CD8-positive, alpha-beta memory T cell (primary cell): ENCODE measurements at regions of chr11 and their contacts with region 1.

Region 1: DNA sequence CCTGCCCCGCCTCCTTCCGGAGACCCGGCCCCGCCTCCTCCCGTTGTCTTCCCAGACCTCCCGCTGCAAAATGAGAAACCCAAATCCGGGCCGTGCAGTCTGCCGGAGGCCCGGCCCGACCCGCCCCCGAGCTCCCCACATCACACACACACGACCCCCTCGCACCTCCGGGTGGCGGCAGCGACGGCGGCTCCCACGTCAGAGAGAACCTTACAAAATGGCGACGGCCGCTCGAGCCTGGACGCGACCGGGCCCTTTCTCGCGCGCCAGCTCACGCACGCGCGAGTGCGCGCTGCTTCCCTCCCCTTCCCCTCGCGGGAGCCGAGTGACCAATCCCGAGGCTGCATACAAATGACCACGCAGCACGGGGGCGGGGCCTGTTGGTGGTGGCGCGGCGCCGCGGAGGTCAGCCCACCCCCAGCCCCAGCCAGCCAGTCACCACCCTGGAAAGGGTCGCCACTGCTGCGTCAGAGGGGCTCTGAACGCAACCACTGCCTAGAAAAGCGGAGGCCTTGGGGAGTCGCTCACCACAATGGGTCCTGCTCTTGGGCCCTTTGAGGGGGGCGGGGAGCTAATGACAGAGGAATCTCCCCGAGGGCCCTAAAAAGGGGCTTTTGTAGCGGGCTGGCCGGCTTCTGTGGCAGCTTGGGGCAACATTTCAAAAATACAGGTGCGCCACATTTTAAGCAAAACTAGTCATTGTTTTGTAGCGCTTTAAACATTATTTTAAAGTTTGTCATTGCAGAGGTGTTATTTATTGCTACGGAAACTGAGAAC is at the start of gene RBM4B:
- DNase-seq: peak; percentile 95 to 98 (median 97)
- H3K4me3 ChIP-seq: peak within 1 kb of the TSS; percentile 99
- H3K4me3 Mint-ChIP-seq: peak within 1 kb of the TSS; percentile 90 to 99 (median 95)
- H3K27ac ChIP-seq: peak within 1 kb of the TSS; percentile 100
- H3K27ac Mint-ChIP-seq: peak within 1 kb of the TSS; percentile 98 to 100 (median 100)
- H3K4me1 ChIP-seq: peaks cover 43% of the 10 kb centered on the region
- H3K4me1 Mint-ChIP-seq: peaks cover 34 to 50% (median 42%) of the 10 kb centered on the region in 3 donors
- H3K27me3 ChIP-seq: no peaks in the 10 kb centered on the region
- H3K27me3 Mint-ChIP-seq: no peaks in the 10 kb centered on the region
- total RNA-seq, gene RBM4B: 19.5 to 20.0 TPM

Region 2: DNA sequence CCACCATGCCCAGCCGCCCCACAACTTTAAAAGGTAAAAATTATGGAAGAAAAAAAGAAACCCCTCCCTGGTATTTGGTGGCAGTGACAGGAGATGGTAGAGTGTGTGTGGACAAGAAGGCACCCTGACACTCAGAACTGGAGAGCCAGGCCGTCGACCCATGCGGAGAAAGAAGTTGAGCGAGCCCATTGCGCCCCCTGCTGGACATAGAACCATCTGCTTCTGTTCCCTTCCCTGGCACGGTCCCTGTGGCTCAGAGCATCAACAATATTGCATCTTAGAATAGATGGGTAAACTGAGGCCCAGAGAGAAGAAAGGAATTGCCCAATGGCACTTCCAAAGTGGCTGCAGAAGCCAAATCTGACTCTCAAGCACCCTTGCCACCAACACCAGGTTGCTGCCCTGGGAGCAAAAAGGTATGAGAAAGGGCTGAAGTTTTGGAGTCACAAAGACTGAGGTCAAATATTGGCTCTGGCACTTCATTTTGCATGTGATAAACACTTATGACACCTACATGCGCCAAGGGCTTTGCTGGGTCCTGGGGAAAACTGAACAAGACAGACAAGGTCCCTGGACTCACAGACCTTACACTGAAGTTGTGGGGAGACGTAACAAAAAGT is 247.7 kb before region 1 on chr11:
- CTCF ChIA-PET with region 1: interaction called, 3 read pairs
- POLR2A ChIA-PET with region 1: interaction called, 12 read pairs
- DNase-seq: peak; percentile 41 to 76 (median 61)
- H3K4me3 ChIP-seq: no peak overlapping the region
- H3K4me3 Mint-ChIP-seq: peak overlapping the region in 1 of 7 donors; percentile 37
- H3K27ac ChIP-seq: no peak overlapping the region
- H3K27ac Mint-ChIP-seq: peak overlapping the region in 1 of 8 donors; percentile 47
- H3K4me1 ChIP-seq: no peaks in the 10 kb centered on the region
- H3K4me1 Mint-ChIP-seq: peaks cover 0 to 3% (median 0%) of the 10 kb centered on the region in 3 donors
- H3K27me3 ChIP-seq: no peaks in the 10 kb centered on the region
- H3K27me3 Mint-ChIP-seq: peaks cover 3 to 4% of the 10 kb centered on the region in 2 donors

Region 3: DNA sequence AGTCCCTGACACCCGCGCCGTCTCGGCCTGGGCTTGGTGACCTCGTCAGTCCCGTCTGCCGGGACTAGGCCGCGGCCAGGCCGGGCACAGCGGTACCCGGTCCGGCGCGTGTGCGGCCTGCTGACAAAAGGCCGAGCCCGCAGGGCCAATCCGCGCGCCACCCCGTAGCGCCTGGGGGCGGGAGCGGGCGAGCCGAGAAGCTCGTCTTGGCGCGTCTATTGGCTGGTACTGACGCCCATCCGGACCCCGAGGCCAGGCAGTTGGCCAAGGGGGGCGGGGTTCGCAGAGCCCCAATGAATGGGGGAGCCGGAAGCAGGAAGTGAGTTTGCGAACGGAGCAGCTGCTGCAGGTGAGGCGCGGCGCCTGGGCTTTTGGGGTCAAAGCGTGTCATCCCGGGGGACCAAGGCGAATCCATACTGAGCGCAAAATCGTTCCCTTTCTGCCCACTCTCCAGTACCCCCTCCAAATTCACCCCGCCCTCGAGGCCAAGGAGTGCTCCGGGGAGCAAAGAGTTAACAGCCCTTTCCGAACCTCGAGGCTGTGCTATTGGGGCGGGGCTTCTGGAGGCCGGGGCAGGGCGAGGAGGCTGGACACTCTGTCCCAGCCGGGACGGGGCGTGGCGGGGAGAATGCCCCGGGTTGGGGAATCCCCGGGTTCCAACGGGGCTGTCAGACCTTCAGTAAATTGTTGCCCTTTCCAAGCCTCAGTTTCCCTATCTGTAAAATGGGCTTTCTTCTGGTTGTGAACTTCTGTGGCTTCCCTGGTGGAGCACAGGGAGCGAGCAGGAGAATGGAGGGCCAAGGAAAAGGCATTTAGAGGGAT is 197.5 kb before region 1 on chr11 and contains the start of gene DPP3:
- CTCF ChIA-PET with region 1: interaction called, 4 read pairs
- POLR2A ChIA-PET with region 1: interaction called, 13 read pairs
- DNase-seq: peak; percentile 93 to 97 (median 94)
- H3K4me3 ChIP-seq: peak within 1 kb of the TSS; percentile 90
- H3K4me3 Mint-ChIP-seq: peak within 1 kb of the TSS; percentile 87 to 99 (median 92)
- H3K27ac ChIP-seq: peak within 1 kb of the TSS; percentile 83
- H3K27ac Mint-ChIP-seq: peak within 1 kb of the TSS; percentile 74 to 97 (median 92)
- H3K4me1 ChIP-seq: peaks cover 18% of the 10 kb centered on the region
- H3K4me1 Mint-ChIP-seq: peaks cover 22 to 40% (median 30%) of the 10 kb centered on the region in 3 donors
- H3K27me3 ChIP-seq: no peaks in the 10 kb centered on the region
- H3K27me3 Mint-ChIP-seq: peaks cover 0 to 1% of the 10 kb centered on the region in 2 donors
- total RNA-seq, gene DPP3: 67.7 to 80.1 TPM

Region 4: DNA sequence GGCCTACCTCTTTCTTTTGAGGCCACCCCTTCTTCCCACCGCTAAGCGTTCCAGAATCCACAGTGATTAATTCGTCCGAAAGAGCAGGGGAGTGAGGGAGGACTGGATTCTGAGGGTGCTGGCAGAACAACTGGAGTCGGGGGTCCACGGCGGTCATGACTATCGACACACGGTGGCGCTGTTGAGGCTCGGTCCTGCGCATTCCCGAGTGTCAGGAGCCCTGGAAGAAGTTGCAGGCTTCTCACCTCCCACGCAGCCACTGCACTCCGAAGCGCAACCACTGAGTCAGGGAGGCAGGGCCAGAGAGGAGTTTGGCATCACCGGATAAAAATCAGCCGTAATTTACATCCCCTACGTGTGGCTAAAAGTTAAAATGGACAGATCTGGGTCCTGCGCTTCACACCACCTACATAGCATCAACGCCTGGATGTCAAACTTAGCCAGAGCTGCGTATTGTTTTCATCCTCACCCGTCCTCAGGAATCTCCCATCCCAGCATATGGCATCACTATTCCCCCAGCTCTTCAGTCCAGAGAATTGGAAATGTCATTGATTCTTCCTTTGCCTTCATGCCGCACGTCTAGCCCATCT is 98.7 kb before region 1 on chr11:
- CTCF ChIA-PET with region 1: interaction called, 135 read pairs
- POLR2A ChIA-PET with region 1: interaction called, 7 read pairs
- DNase-seq: peak; percentile 63 to 85 (median 71)
- H3K4me3 ChIP-seq: no peak overlapping the region
- H3K4me3 Mint-ChIP-seq: no peak overlapping the region
- H3K27ac ChIP-seq: no peak overlapping the region
- H3K27ac Mint-ChIP-seq: peak overlapping the region in 3 of 8 donors; percentile 12 to 91 (median 17)
- H3K4me1 ChIP-seq: peaks cover 3% of the 10 kb centered on the region
- H3K4me1 Mint-ChIP-seq: peaks cover 9 to 11% (median 10%) of the 10 kb centered on the region in 3 donors
- H3K27me3 ChIP-seq: no peaks in the 10 kb centered on the region
- H3K27me3 Mint-ChIP-seq: peaks cover 2 to 23% of the 10 kb centered on the region in 2 donors

Region 5: DNA sequence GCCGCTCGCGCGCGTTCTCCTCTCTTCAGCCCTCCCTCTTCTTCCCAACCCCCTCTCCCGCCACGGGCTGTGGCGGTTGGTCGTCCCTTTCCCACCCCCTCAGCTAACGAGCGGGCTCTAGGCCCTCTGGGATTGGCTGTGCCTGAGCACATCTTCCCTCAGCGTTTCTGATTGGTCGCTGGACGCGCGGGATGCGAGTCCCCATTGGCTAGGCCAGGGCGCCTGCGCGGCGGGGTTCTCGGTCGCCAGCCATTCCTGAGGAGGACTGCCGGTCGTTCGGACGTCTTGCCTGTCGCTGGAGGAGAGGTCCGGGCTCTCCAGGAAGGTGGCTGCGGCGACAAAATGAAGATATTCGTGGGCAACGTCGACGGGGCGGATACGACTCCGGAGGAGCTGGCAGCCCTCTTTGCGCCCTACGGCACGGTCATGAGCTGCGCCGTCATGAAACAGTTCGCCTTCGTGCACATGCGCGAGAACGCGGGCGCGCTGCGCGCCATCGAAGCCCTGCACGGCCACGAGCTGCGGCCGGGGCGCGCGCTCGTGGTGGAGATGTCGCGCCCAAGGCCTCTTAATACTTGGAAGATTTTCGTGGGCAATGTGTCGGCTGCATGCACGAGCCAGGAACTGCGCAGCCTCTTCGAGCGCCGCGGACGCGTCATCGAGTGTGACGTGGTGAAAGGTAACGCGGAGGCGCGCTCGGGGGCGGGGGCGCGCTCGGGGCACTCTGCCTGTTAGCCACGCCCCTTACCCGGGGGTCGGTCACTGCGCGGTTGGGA is 61.2 kb before region 1 on chr11 and contains the start of gene RBM14:
- CTCF ChIA-PET with region 1: interaction called, 11 read pairs
- POLR2A ChIA-PET with region 1: interaction called, 40 read pairs
- DNase-seq: peak; percentile 97 to 99 (median 98)
- H3K4me3 ChIP-seq: peak within 1 kb of the TSS; percentile 99
- H3K4me3 Mint-ChIP-seq: peak within 1 kb of the TSS; percentile 97 to 99 (median 98)
- H3K27ac ChIP-seq: peak within 1 kb of the TSS; percentile 100
- H3K27ac Mint-ChIP-seq: peak within 1 kb of the TSS; percentile 97 to 100 (median 99)
- H3K4me1 ChIP-seq: peaks cover 41% of the 10 kb centered on the region
- H3K4me1 Mint-ChIP-seq: peaks cover 44 to 61% (median 47%) of the 10 kb centered on the region in 3 donors
- H3K27me3 ChIP-seq: no peaks in the 10 kb centered on the region
- H3K27me3 Mint-ChIP-seq: peaks cover 0 to 4% of the 10 kb centered on the region in 2 donors
- total RNA-seq, gene RBM14: 152 to 165 TPM

Region 6: DNA sequence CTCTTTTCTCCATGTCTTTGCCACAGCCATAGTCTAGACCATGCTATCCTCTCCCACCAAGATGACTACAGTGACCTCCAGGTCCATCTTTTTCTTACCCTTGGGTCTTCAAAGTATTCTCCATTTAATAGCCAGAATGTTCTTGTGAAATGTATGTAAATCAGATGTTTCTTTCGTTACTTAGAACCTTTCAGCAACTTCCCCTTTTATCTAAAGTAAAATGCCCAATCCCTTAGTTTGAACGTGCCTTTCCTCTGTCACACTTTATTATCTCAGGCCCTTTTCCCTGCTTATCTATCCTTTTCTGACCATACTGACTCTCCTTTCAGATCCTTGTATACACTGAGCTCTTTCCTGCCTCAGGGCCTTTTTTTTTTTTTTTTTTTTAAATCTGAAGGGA is 18.0 kb before region 1 on chr11:
- CTCF ChIA-PET with region 1: interaction called, 15 read pairs
- POLR2A ChIA-PET with region 1: interaction called, 3 read pairs
- DNase-seq: no peak
- H3K4me3 ChIP-seq: no peak overlapping the region
- H3K4me3 Mint-ChIP-seq: no peak overlapping the region
- H3K27ac ChIP-seq: no peak overlapping the region
- H3K27ac Mint-ChIP-seq: peak overlapping the region in 5 of 8 donors; percentile 1 to 43 (median 4)
- H3K4me1 ChIP-seq: no peaks in the 10 kb centered on the region
- H3K4me1 Mint-ChIP-seq: peaks cover 15 to 32% (median 25%) of the 10 kb centered on the region in 3 donors
- H3K27me3 ChIP-seq: no peaks in the 10 kb centered on the region
- H3K27me3 Mint-ChIP-seq: peaks cover 0 to 2% of the 10 kb centered on the region in 2 donors

Region 7: GRCh38 chr11:66749070-66749469 is 71.3 kb after region 1 on chr11:
- CTCF ChIA-PET with region 1: no interaction called
- POLR2A ChIA-PET with region 1: no interaction called
- DNase-seq: no peak
- H3K4me3 ChIP-seq: no peak overlapping the region
- H3K4me3 Mint-ChIP-seq: peak overlapping the region in 1 of 7 donors; percentile 54
- H3K27ac ChIP-seq: no peak overlapping the region
- H3K27ac Mint-ChIP-seq: peak overlapping the region in 1 of 8 donors; percentile 19
- H3K4me1 ChIP-seq: no peaks in the 10 kb centered on the region
- H3K4me1 Mint-ChIP-seq: peaks cover 0 to 13% (median 3%) of the 10 kb centered on the region in 3 donors
- H3K27me3 ChIP-seq: no peaks in the 10 kb centered on the region
- H3K27me3 Mint-ChIP-seq: no peaks in the 10 kb centered on the region